ENCODE measurements at regions of chr11 and their contacts with region 1.

Region 1: GRCh38 chr11:66222358-66223149 is 45.9 kb upstream of the RAB1B start:
- DNase-seq: peak; percentile 88 to 94 (median 91)
- H3K4me3 ChIP-seq: no peak overlapping the region
- H3K4me3 Mint-ChIP-seq: no peak overlapping the region
- H3K27ac ChIP-seq: peak overlapping the region; percentile 8 to 38
- H3K27ac Mint-ChIP-seq: peak overlapping the region; percentile 28 to 91 (median 61)
- H3K4me1 ChIP-seq: no peaks in the 10 kb centered on the region
- H3K4me1 Mint-ChIP-seq: peaks cover 5% of the 10 kb centered on the region
- H3K27me3 ChIP-seq: no peaks in the 10 kb centered on the region
- H3K27me3 Mint-ChIP-seq: peaks cover 0 to 2% (median 0%) of the 10 kb centered on the region in 3 donors
- CTCF ChIP-seq: peak; percentile 99

Region 2: GRCh38 chr11:66282468-66283386 is 60.2 kb after region 1 on chr11:
- intact Hi-C with region 1: loop called (anchors 2 kb)
- DNase-seq: peak; percentile 98 to 99 (median 98)
- H3K4me3 ChIP-seq: no peak overlapping the region
- H3K4me3 Mint-ChIP-seq: no peak overlapping the region
- H3K27ac ChIP-seq: no peak overlapping the region
- H3K27ac Mint-ChIP-seq: peak overlapping the region in 2 of 7 donors; percentile 70
- H3K4me1 ChIP-seq: peaks cover 15 to 28% of the 10 kb centered on the region in 2 donors
- H3K4me1 Mint-ChIP-seq: peaks cover 26% of the 10 kb centered on the region
- H3K27me3 ChIP-seq: peaks cover 3 to 18% of the 10 kb centered on the region in 2 donors
- H3K27me3 Mint-ChIP-seq: peaks cover 21 to 26% (median 24%) of the 10 kb centered on the region in 3 donors
- CTCF ChIP-seq: peak; percentile 96

Region 3: GRCh38 chr11:66311965-66312548 is 89.5 kb after region 1 on chr11:
- intact Hi-C with region 1: no loop called
- DNase-seq: peak; percentile 78 to 85 (median 83)
- H3K4me3 ChIP-seq: peak overlapping the region; percentile 40 to 90 (median 69)
- H3K4me3 Mint-ChIP-seq: peak overlapping the region; percentile 92 to 98
- H3K27ac ChIP-seq: peak overlapping the region; percentile 85 to 90
- H3K27ac Mint-ChIP-seq: peak overlapping the region; percentile 96 to 99 (median 97)
- H3K4me1 ChIP-seq: peaks cover 32 to 42% of the 10 kb centered on the region in 2 donors
- H3K4me1 Mint-ChIP-seq: peaks cover 25% of the 10 kb centered on the region
- H3K27me3 ChIP-seq: no peaks in the 10 kb centered on the region
- H3K27me3 Mint-ChIP-seq: peaks cover 8 to 17% (median 13%) of the 10 kb centered on the region in 3 donors
- CTCF ChIP-seq: peak; percentile 98

Measured in CD14-positive monocyte (primary cell).